ENCODE measurements at regions of chr1 and their contacts with region 1.

Region 1: GRCh38 chr1:26500488-26501175 is 28.4 kb downstream of the HMGN2 start:
- DNase-seq: peak; percentile 77
- H3K4me3 ChIP-seq: peak overlapping the region; percentile 55 to 75 (median 62)
- H3K27ac ChIP-seq: peak overlapping the region; percentile 59
- H3K4me1 ChIP-seq: peaks cover 16% of the 10 kb centered on the region
- H3K27me3 ChIP-seq: no peaks in the 10 kb centered on the region
- CTCF ChIP-seq: no peak

Region 2: GRCh38 chr1:26450908-26451307 is 49.7 kb before region 1 on chr1:
- CTCF ChIA-PET with region 1: no interaction called
- dilution Hi-C with region 1: no loop called
- in situ Hi-C with region 1: no loop called
- intact Hi-C with region 1: no loop called
- DNase-seq: no peak
- H3K4me3 ChIP-seq: no peak overlapping the region
- H3K27ac ChIP-seq: no peak overlapping the region
- H3K4me1 ChIP-seq: no peaks in the 10 kb centered on the region
- H3K27me3 ChIP-seq: no peaks in the 10 kb centered on the region
- CTCF ChIP-seq: no peak

Region 3: GRCh38 chr1:26529655-26530409 is 29.2 kb after region 1 on chr1 and contains the start of gene RPS6KA1:
- CTCF ChIA-PET with region 1: interaction called, 11 read pairs
- dilution Hi-C with region 1: loop called (anchors 5 kb)
- in situ Hi-C with region 1: no loop called
- intact Hi-C with region 1: loop called (anchors 1 kb)
- DNase-seq: peak; percentile 60
- H3K4me3 ChIP-seq: peak within 1 kb of the TSS; percentile 68 to 90 (median 77)
- H3K27ac ChIP-seq: peak within 1 kb of the TSS; percentile 83
- H3K4me1 ChIP-seq: peaks cover 22% of the 10 kb centered on the region
- H3K27me3 ChIP-seq: no peaks in the 10 kb centered on the region
- CTCF ChIP-seq: no peak
- total RNA-seq, gene RPS6KA1: 107 to 142 TPM

Region 4: GRCh38 chr1:26593385-26593784 is 92.8 kb after region 1 on chr1:
- CTCF ChIA-PET with region 1: no interaction called
- dilution Hi-C with region 1: loop called (anchors 5 kb)
- in situ Hi-C with region 1: no loop called
- intact Hi-C with region 1: loop called (anchors 1 kb)
- DNase-seq: no peak
- H3K4me3 ChIP-seq: no peak overlapping the region
- H3K27ac ChIP-seq: no peak overlapping the region
- H3K4me1 ChIP-seq: no peaks in the 10 kb centered on the region
- H3K27me3 ChIP-seq: no peaks in the 10 kb centered on the region
- CTCF ChIP-seq: no peak

Region 5: DNA sequence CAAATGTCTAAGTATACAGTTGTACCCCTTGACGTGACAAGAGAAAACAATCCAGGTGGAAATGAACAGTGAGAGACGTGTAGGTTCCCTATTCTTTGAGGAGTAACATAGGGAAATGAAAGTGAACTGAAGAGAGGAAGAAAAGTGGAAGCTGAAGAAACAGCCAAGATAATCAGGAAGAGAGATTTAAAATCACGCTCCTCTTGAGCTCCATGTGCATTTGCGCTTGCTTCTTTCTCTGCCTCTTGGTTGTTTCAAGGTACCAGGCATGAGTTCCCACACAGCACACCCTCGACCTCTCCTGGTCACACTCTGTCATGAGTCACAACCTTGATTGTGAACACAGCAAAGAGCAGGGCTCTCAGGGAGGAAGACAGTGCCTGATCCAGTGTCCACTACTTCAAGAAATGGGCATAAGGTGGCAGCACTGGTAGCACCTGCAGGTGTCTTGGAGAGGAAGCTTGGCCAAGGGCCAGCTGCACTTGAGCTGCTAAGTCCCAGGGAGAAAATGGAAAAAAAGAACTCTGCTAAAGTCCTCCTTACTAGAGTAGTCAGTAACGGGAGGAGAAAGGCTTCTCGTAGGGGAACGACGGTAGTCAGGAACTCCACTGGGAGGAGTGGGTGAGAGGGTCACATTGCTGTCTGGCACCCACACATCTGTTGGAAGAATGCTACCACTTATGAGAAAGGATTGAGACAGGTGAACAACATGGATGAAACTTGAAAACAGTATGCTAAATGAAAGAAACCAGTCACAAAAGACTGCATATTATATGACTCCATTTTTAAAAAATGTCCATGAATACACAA is 176.9 kb after region 1 on chr1:
- CTCF ChIA-PET with region 1: no interaction called
- dilution Hi-C with region 1: no loop called
- in situ Hi-C with region 1: no loop called
- intact Hi-C with region 1: loop called (anchors 1 kb)
- DNase-seq: peak; percentile 91
- H3K4me3 ChIP-seq: no peak overlapping the region
- H3K27ac ChIP-seq: no peak overlapping the region
- H3K4me1 ChIP-seq: peaks cover 4% of the 10 kb centered on the region
- H3K27me3 ChIP-seq: no peaks in the 10 kb centered on the region
- CTCF ChIP-seq: peak; percentile 77 to 90

Region 6: GRCh38 chr1:26811057-26811456 is 310.4 kb after region 1 on chr1:
- CTCF ChIA-PET with region 1: interaction called, 18 read pairs
- dilution Hi-C with region 1: no loop called
- in situ Hi-C with region 1: no loop called
- intact Hi-C with region 1: no loop called
- DNase-seq: no peak
- H3K4me3 ChIP-seq: no peak overlapping the region
- H3K27ac ChIP-seq: no peak overlapping the region
- H3K4me1 ChIP-seq: no peaks in the 10 kb centered on the region
- H3K27me3 ChIP-seq: no peaks in the 10 kb centered on the region
- CTCF ChIP-seq: no peak

Measured in mammary epithelial cell (primary cell).